OCI-LY7 (cell line): ENCODE measurements at regions of chr17 and their contacts with region 1.

Region 1: GRCh38 chr17:78736526-78737079 is 45.5 kb downstream of the CYTH1 start:
- DNase-seq: peak; percentile 91
- H3K4me3 ChIP-seq: peak overlapping the region; percentile 82
- H3K27ac ChIP-seq: peak overlapping the region; percentile 90
- H3K4me1 ChIP-seq: peaks cover 88% of the 10 kb centered on the region
- CTCF ChIP-seq: 0 out of 2 replicates have a peak, but pooled peaks have one; percentile 33

Region 2: GRCh38 chr17:77465358-77466041 is 1271.1 kb before region 1 on chr17:
- CTCF ChIA-PET with region 1: no interaction called
- POLR2A ChIA-PET with region 1: no interaction called
- intact Hi-C with region 1: loop called (anchors 10 kb)
- DNase-seq: peak; percentile 96
- H3K4me3 ChIP-seq: peak overlapping the region; percentile 52
- H3K27ac ChIP-seq: peak overlapping the region; percentile 95
- H3K4me1 ChIP-seq: peaks cover 97% of the 10 kb centered on the region
- CTCF ChIP-seq: no peak

Region 3: DNA sequence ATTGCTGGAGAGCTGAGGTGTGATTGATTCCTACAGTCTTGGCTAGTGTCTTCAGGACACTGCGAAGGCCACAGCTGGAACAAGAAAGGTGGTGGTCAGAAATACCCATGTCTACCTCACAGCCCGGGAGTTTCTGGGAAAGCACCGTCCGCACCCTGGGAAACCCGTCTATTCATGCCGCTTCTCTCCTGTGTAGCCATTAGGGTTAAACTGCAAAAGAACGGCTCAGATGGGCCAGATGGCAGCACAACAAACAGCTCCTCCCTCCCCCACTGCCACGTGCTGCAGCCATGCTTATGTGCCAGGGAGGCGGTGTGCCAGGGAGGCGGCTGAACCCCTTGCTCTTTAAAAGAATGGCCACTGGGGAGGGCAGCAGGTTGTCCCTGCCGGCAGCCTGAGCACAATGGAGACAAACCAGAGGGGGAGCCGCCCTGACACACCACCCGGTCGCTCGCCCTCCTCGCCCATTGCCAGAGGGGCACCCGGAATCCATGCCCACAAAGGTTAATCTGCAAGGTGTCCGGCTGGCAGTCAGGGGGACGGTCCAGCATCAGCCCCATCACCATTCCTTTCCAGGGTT is 19.7 kb before region 1 on chr17:
- CTCF ChIA-PET with region 1: interaction called, 8 read pairs
- POLR2A ChIA-PET with region 1: interaction called, 127 read pairs
- intact Hi-C with region 1: loop called (anchors 1 kb)
- DNase-seq: peak; percentile 67
- H3K4me3 ChIP-seq: peak overlapping the region; percentile 62
- H3K27ac ChIP-seq: peak overlapping the region; percentile 88
- H3K4me1 ChIP-seq: peaks cover 98% of the 10 kb centered on the region
- CTCF ChIP-seq: no peak

Region 4: DNA sequence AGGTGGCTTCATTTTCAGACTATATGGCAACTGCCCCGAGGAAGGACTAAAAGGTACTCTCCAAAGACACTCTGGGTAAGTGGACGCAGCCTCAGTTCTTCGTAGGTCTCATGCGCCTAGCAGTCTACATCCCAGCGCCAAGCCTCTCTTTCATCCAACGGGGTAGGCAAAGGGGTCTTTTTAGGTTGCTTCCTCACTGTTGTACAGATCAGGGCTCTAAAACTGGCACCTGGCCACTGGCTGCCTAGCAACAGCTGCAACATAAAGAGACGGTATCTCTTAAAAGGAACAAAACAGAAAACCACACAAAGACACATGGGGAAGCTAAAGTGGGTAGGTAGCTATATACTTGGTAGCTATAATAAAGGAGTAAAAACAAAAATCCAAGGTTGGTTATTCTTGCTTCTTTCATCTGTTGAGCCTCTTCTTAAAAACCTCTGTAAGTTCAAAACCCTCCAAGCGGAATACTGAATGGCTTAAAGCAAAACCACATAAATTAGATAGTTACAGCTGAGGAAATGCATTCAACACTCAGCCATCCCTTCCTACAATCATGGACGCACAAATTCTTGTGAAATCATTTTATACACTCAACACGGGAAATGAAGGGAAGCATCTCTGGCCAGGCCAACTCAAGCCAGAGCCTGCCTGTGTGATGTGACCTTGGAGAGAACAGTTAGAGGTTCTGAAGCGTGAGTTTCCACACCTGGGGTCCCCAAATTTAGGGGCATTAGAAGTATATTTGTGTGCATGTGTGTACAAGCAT is 22.8 kb after region 1 on chr17:
- CTCF ChIA-PET with region 1: interaction called, 9 read pairs
- POLR2A ChIA-PET with region 1: interaction called, 11 read pairs
- intact Hi-C with region 1: loop called (anchors 2 kb)
- DNase-seq: peak; percentile 93
- H3K4me3 ChIP-seq: peak overlapping the region; percentile 57
- H3K27ac ChIP-seq: peak overlapping the region; percentile 90
- H3K4me1 ChIP-seq: peaks cover 66% of the 10 kb centered on the region
- CTCF ChIP-seq: no peak

Region 5: GRCh38 chr17:78781948-78782916 is 45.6 kb after region 1 on chr17 and contains the start of gene CYTH1:
- CTCF ChIA-PET with region 1: no interaction called
- POLR2A ChIA-PET with region 1: interaction called, 16 read pairs
- intact Hi-C with region 1: no loop called
- DNase-seq: peak; percentile 94
- H3K4me3 ChIP-seq: peak within 1 kb of the TSS; percentile 91
- H3K27ac ChIP-seq: peak within 1 kb of the TSS; percentile 85
- H3K4me1 ChIP-seq: peaks cover 37% of the 10 kb centered on the region
- CTCF ChIP-seq: no peak
- total RNA-seq, gene CYTH1: 73.0 and 88.1 TPM in 2 replicates

Region 6: DNA sequence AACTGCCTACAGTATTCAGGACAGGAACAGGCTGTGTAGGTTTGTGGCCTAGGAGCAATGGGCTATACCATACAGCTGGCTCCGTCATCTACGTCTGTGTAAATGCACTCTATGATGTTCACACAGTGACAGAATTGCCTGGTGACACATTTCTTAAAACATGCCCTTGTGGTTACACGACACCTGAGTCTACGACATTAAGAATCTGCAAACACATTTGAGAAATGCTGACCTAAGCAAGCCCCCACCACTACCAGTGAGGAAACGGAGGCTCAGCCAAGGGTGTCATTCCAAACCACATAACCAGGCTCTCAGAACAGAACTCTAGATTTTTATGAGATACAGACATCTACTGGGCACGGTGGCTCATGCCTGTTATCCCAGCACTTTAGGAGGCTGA is 80.5 kb after region 1 on chr17:
- CTCF ChIA-PET with region 1: no interaction called
- POLR2A ChIA-PET with region 1: no interaction called
- intact Hi-C with region 1: no loop called
- DNase-seq: no peak
- H3K4me3 ChIP-seq: no peak overlapping the region
- H3K27ac ChIP-seq: no peak overlapping the region
- H3K4me1 ChIP-seq: no peaks in the 10 kb centered on the region
- CTCF ChIP-seq: no peak